GM12878 (cell line): ENCODE measurements at regions of chr5 and their contacts with region 1.

Region 1: DNA sequence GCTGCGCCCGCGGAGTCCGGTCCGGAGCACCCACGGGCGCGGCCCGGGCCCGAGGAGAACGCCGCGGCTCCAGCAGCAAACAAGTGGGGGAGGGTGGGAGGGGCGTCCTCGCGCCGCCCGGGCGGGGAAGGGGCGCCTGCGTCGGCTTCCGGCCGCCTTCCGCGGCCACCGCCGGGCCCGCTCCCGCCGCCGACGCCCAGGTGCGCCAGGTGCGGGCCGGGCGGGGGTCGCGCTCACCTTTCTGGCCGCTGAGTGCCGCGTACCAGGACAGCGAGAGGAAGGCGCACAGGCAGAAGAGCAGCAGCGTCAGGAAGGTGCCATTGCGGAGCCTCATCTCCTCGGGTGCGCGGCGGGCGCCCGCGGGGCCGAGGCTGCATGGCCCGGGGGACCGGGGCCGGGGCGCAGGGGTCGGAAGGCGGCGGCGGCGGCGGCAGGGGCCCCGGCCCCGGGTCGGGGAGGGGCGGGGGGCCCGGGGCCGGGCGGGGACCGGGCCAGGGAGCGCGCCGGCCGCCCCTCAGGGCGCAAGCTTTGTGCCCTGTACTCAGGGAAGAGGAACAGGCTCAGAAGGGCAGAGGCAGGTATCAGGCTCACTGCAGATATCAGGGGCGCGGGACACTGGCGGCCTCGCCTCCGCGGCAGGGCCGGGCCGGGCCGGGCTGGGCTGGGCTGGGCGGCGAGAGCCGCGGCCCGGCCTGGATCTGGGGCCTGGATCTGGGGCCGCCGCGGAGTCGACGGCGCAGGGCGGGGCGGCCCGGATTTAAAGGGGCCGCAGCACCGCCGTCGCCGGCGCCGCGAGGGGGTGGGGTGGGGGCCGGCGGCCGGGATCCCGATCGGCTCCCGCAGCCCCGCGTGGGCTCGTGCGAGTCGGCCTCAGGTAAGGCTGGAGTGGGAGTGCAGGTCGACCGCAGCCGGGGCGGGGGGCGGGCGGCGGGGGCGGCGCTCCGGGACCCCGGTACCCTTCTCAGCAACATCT is at the start of gene MGAT4B:
- DNase-seq: no peak
- ATAC-seq: peak; percentile 82
- H3K4me3 ChIP-seq: peak within 1 kb of the TSS; percentile 87
- H3K27ac ChIP-seq: peak within 1 kb of the TSS; percentile 78
- H3K4me1 ChIP-seq: peaks cover 16% of the 10 kb centered on the region
- H3K27me3 ChIP-seq: no peaks in the 10 kb centered on the region
- CTCF ChIP-seq: no peak
- EP300 ChIP-seq: 0 out of 4 replicates have a peak, but pooled peaks of 1 of the 2 experiments have one; percentile 26
- POLR2A ChIP-seq: peak; percentile 75
- RAD21 ChIP-seq: no peak
- polyA plus RNA-seq, gene MGAT4B: 0.60 TPM in 1 of 2 experiments, not detected in the other

Region 2: GRCh38 chr5:179821581-179822432 is 15.3 kb after region 1 on chr5:
- CTCF ChIA-PET with region 1: interaction called, 6 read pairs
- POLR2A ChIA-PET with region 1: interaction called, 9 read pairs
- RAD21 ChIA-PET with region 1: interaction called, 6 read pairs
- SMC1A ChIA-PET with region 1: interaction called, 5 read pairs
- in situ Hi-C with region 1: no loop called
- intact Hi-C with region 1: loop called (anchors 1 kb)
- DNase-seq: no peak
- ATAC-seq: peak; percentile 74
- H3K4me3 ChIP-seq: peak overlapping the region; percentile 93
- H3K27ac ChIP-seq: peak overlapping the region; percentile 96
- H3K4me1 ChIP-seq: peaks cover 35% of the 10 kb centered on the region
- H3K27me3 ChIP-seq: no peaks in the 10 kb centered on the region
- CTCF ChIP-seq: no peak
- EP300 ChIP-seq: no peak
- POLR2A ChIP-seq: peak; percentile 73
- RAD21 ChIP-seq: no peak

Region 3: GRCh38 chr5:179858586-179859427 is 52.3 kb after region 1 on chr5 and contains the start of gene MRNIP:
- CTCF ChIA-PET with region 1: interaction called, 13 read pairs
- POLR2A ChIA-PET with region 1: interaction called, 3 read pairs
- RAD21 ChIA-PET with region 1: interaction called, 5 read pairs
- SMC1A ChIA-PET with region 1: interaction called, 7 read pairs
- in situ Hi-C with region 1: no loop called
- intact Hi-C with region 1: loop called (anchors 2 kb)
- DNase-seq: peak; percentile 79
- ATAC-seq: peak; percentile 98
- H3K4me3 ChIP-seq: peak within 1 kb of the TSS; percentile 93
- H3K27ac ChIP-seq: peak within 1 kb of the TSS; percentile 73
- H3K4me1 ChIP-seq: peaks cover 4% of the 10 kb centered on the region; the same call in 1 of the 2 replicates
- H3K27me3 ChIP-seq: no peaks in the 10 kb centered on the region
- CTCF ChIP-seq: peak in 1 of 3 experiments; percentile 57; a peak in 2 of 6 replicates
- EP300 ChIP-seq: peak; percentile 7 to 16; a peak in 1 of 4 replicates
- POLR2A ChIP-seq: peak; percentile 83
- RAD21 ChIP-seq: peak; percentile 27; the same call in 1 of the 2 replicates
- polyA plus RNA-seq, gene MRNIP: 2.4 to 13.6 TPM

Region 4: DNA sequence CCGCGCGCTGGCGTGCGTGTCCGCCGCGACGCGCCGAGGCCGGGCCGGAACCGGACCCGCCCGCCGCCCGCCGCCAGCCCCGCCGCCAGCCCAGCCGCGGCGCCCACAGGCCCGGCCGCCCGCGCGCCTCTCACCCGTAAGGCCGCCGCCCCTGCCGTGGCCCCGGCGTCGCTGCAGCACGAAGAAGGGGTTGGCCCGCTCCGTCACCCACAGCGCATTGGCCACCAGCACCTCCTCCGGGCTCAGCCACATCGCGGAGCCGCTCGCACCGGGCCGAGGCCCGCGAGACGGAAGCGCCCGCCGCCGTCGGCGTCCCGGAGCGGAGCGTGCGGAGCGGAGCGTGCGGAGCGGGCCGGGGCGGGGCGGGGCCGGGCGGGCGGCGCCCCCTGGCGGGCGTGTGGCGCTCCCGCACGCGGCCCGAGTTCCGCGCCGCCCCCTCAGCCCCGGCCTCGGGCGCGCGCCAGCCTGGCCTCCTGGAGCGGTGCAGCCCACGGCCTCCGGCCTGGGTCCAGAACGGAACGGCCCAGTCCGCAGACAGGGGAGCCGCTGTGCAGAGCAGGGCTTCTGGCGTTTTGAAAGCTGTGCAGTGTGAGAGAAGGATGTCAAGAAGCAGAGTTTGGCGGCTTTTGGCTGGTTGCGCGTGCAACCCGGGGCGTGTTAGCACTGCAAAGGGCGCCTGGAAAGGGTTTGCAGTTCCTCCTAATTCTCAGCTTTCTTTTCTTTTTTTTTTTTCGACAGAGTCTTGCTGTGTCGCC is 101.2 kb after region 1 on chr5 and contains the start of gene TBC1D9B:
- CTCF ChIA-PET with region 1: interaction called, 19 read pairs
- POLR2A ChIA-PET with region 1: no interaction called
- RAD21 ChIA-PET with region 1: interaction called, 6 read pairs
- SMC1A ChIA-PET with region 1: interaction called, 9 read pairs
- in situ Hi-C with region 1: loop called (anchors 5 kb)
- intact Hi-C with region 1: loop called (anchors 5 kb)
- DNase-seq: no peak
- ATAC-seq: peak; percentile 93
- H3K4me3 ChIP-seq: peak within 1 kb of the TSS; percentile 94
- H3K27ac ChIP-seq: peak within 1 kb of the TSS; percentile 56; the same call in 1 of the 2 replicates
- H3K4me1 ChIP-seq: peaks cover 12% of the 10 kb centered on the region
- H3K27me3 ChIP-seq: no peaks in the 10 kb centered on the region
- CTCF ChIP-seq: peak in 2 of 3 experiments; percentile 27 to 47; a peak in 2 of 6 replicates
- EP300 ChIP-seq: no peak
- POLR2A ChIP-seq: peak; percentile 85
- RAD21 ChIP-seq: 0 out of 2 replicates have a peak, but pooled peaks have one; percentile 13
- polyA plus RNA-seq, gene TBC1D9B: 4.0 to 8.3 TPM

Region 5: GRCh38 chr5:179914032-179914755 is 107.7 kb after region 1 on chr5:
- CTCF ChIA-PET with region 1: interaction called, 9 read pairs
- POLR2A ChIA-PET with region 1: no interaction called
- RAD21 ChIA-PET with region 1: interaction called, 4 read pairs
- SMC1A ChIA-PET with region 1: no interaction called
- in situ Hi-C with region 1: loop called (anchors 5 kb)
- intact Hi-C with region 1: loop called (anchors 5 kb)
- DNase-seq: no peak
- ATAC-seq: peak; percentile 59
- H3K4me3 ChIP-seq: no peak overlapping the region
- H3K27ac ChIP-seq: no peak overlapping the region
- H3K4me1 ChIP-seq: peaks cover 7% of the 10 kb centered on the region
- H3K27me3 ChIP-seq: no peaks in the 10 kb centered on the region
- CTCF ChIP-seq: no peak
- EP300 ChIP-seq: no peak
- POLR2A ChIP-seq: no peak
- RAD21 ChIP-seq: no peak

Region 6: GRCh38 chr5:179974946-179975712 is 168.6 kb after region 1 on chr5:
- CTCF ChIA-PET with region 1: interaction called, 6 read pairs
- POLR2A ChIA-PET with region 1: no interaction called
- RAD21 ChIA-PET with region 1: interaction called, 3 read pairs
- SMC1A ChIA-PET with region 1: interaction called, 7 read pairs
- in situ Hi-C with region 1: no loop called
- intact Hi-C with region 1: loop called (anchors 1 kb)
- DNase-seq: no peak
- ATAC-seq: peak; percentile 96
- H3K4me3 ChIP-seq: no peak overlapping the region
- H3K27ac ChIP-seq: no peak overlapping the region
- H3K4me1 ChIP-seq: peaks cover 4% of the 10 kb centered on the region; the same call in 1 of the 2 replicates
- H3K27me3 ChIP-seq: no peaks in the 10 kb centered on the region
- CTCF ChIP-seq: peak; percentile 55 to 77 (median 68)
- EP300 ChIP-seq: no peak
- POLR2A ChIP-seq: no peak
- RAD21 ChIP-seq: peak; percentile 48

Region 7: GRCh38 chr5:180090098-180090768 is 283.7 kb after region 1 on chr5:
- CTCF ChIA-PET with region 1: interaction called, 5 read pairs
- POLR2A ChIA-PET with region 1: no interaction called
- RAD21 ChIA-PET with region 1: no interaction called
- SMC1A ChIA-PET with region 1: no interaction called
- in situ Hi-C with region 1: no loop called
- intact Hi-C with region 1: loop called (anchors 2 kb)
- DNase-seq: no peak
- ATAC-seq: peak; percentile 89
- H3K4me3 ChIP-seq: no peak overlapping the region
- H3K27ac ChIP-seq: no peak overlapping the region
- H3K4me1 ChIP-seq: no peaks in the 10 kb centered on the region
- H3K27me3 ChIP-seq: no peaks in the 10 kb centered on the region; a peak in 1 of 4 replicates
- CTCF ChIP-seq: peak; percentile 54 to 70 (median 57); a peak in 5 of 6 replicates
- EP300 ChIP-seq: no peak
- POLR2A ChIP-seq: no peak; the same call in 1 of the 2 replicates
- RAD21 ChIP-seq: peak; percentile 41